Caco-2 (cell line): ENCODE measurements at regions of chr6 and their contacts with region 1.

Region 1: GRCh38 chr6:133923938-133924593 is 29.0 kb upstream of the TBPL1 start:
- DNase-seq: peak; percentile 54 to 69
- H3K4me3 ChIP-seq: no peak overlapping the region
- H3K4me3 Mint-ChIP-seq: no peak overlapping the region
- H3K27ac Mint-ChIP-seq: no peak overlapping the region
- H3K4me1 ChIP-seq: no peaks in the 10 kb centered on the region
- H3K4me1 Mint-ChIP-seq: no peaks in the 10 kb centered on the region
- H3K27me3 ChIP-seq: no peaks in the 10 kb centered on the region
- H3K27me3 Mint-ChIP-seq: peaks cover 12% of the 10 kb centered on the region
- CTCF ChIP-seq: peak; percentile 71 to 77

Region 2: DNA sequence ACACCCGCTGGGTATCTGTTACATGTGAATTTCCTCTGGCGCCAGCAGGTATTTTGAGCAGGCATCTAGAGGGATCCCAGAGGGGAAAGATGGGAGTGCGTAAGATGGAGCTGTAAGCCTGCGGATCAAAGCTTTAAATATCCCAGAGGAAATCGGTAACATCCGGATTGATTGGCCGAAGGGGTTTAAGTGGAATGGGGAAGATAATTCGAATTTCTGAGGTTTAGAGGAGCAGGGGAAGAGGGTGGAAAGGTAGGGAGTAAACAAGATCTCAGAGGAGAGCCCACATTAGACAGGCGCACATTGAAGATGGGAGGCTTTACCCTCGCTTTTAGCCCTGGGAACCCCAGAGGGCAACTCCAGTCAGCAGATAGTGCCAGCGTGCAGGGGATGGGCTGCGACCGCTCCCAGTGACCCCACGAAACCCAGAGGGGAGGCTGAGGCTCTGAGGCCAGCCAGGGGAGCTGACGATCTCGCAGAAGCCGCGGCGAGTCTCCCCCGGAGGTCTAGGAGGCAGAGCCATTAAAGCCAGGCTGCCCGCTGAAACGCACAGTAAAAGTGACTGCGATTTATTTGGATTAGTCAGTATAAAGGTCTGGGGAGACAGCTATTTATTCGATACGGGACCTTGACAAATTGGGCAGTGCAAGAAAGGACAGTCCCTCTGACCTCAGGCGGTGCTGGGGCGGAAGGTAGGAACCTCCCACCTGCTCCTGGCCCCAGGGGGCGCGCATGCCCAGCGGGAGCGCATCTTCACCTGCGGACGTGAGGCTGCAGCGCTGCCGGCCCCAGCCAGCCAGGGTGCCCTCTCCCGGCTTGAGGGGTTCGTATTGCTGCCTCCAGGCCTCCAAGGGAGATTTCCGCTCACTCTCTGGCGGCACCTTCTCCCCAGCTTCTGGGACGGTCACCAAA is 69.4 kb before region 1 on chr6:
- CTCF ChIA-PET with region 1: no interaction called
- POLR2A ChIA-PET with region 1: no interaction called
- intact Hi-C with region 1: no loop called
- DNase-seq: peak; percentile 56 to 61
- H3K4me3 ChIP-seq: 0 out of 2 replicates have a peak overlapping the region, but pooled peaks have one; percentile 23
- H3K4me3 Mint-ChIP-seq: peak overlapping the region; percentile 44
- H3K27ac Mint-ChIP-seq: no peak overlapping the region
- H3K4me1 ChIP-seq: no peaks in the 10 kb centered on the region
- H3K4me1 Mint-ChIP-seq: no peaks in the 10 kb centered on the region
- H3K27me3 ChIP-seq: no peaks in the 10 kb centered on the region
- H3K27me3 Mint-ChIP-seq: peaks cover 16% of the 10 kb centered on the region
- CTCF ChIP-seq: peak in 1 of 2 experiments; percentile 46

Region 3: GRCh38 chr6:133952815-133953633 is 29.0 kb after region 1 on chr6 and contains the start of gene TBPL1:
- CTCF ChIA-PET with region 1: interaction called, 5 read pairs
- POLR2A ChIA-PET with region 1: no interaction called
- intact Hi-C with region 1: loop called (anchors 2 kb)
- DNase-seq: peak; percentile 88 to 91
- H3K4me3 ChIP-seq: peak within 1 kb of the TSS; percentile 76
- H3K4me3 Mint-ChIP-seq: peak within 1 kb of the TSS; percentile 96
- H3K27ac Mint-ChIP-seq: peak within 1 kb of the TSS; percentile 86
- H3K4me1 ChIP-seq: peaks cover 5% of the 10 kb centered on the region; the same call in 1 of the 2 replicates
- H3K4me1 Mint-ChIP-seq: peaks cover 7% of the 10 kb centered on the region
- H3K27me3 ChIP-seq: no peaks in the 10 kb centered on the region
- H3K27me3 Mint-ChIP-seq: peaks cover 6% of the 10 kb centered on the region
- CTCF ChIP-seq: no peak
- total RNA-seq, gene TBPL1: 19.3 and 23.6 TPM in 2 replicates

Region 4: GRCh38 chr6:133973109-133973971 is 49.3 kb after region 1 on chr6:
- CTCF ChIA-PET with region 1: interaction called, 3 read pairs
- POLR2A ChIA-PET with region 1: no interaction called
- intact Hi-C with region 1: loop called (anchors 1 kb)
- DNase-seq: no peak
- H3K4me3 ChIP-seq: no peak overlapping the region
- H3K4me3 Mint-ChIP-seq: no peak overlapping the region
- H3K27ac Mint-ChIP-seq: no peak overlapping the region
- H3K4me1 ChIP-seq: no peaks in the 10 kb centered on the region
- H3K4me1 Mint-ChIP-seq: peaks cover 3% of the 10 kb centered on the region
- H3K27me3 ChIP-seq: no peaks in the 10 kb centered on the region
- H3K27me3 Mint-ChIP-seq: no peaks in the 10 kb centered on the region
- CTCF ChIP-seq: peak; percentile 40 to 58

Region 5: GRCh38 chr6:134063966-134064445 is 139.9 kb after region 1 on chr6:
- CTCF ChIA-PET with region 1: interaction called, 21 read pairs
- POLR2A ChIA-PET with region 1: no interaction called
- intact Hi-C with region 1: loop called (anchors 1 kb)
- DNase-seq: peak; percentile 70 to 77
- H3K4me3 ChIP-seq: no peak overlapping the region
- H3K4me3 Mint-ChIP-seq: no peak overlapping the region
- H3K27ac Mint-ChIP-seq: no peak overlapping the region
- H3K4me1 ChIP-seq: peaks cover 10% of the 10 kb centered on the region
- H3K4me1 Mint-ChIP-seq: peaks cover 11% of the 10 kb centered on the region
- H3K27me3 ChIP-seq: no peaks in the 10 kb centered on the region
- H3K27me3 Mint-ChIP-seq: no peaks in the 10 kb centered on the region
- CTCF ChIP-seq: peak; percentile 83 to 94

Region 6: DNA sequence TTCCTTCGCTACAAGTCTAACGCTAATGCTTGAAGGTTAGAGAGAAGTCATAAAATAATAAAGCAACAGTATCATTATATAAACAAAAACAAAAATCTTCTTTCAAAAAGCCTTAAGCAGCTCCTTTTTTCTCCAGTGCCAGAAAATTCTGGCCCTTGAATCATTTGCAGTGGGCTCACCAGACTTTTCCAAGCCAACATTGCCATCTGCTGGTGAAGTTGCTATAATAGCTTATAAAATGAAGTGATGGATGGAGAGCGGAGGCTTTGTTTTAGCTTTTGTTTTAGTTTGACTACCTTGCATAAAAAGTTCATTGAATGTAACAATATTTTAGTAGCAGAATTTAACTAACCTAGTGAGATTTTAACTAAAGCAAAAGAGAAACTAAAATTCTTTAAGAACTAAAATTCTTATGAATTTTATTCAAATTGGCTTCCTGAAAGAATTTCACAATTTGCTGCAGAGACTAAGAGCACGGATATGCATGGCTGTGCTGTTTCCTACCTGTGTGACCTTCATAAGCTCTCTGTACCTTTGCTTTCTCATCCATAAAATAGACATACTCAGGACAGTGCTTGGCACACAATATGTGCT is 173.1 kb after region 1 on chr6:
- CTCF ChIA-PET with region 1: interaction called, 97 read pairs
- POLR2A ChIA-PET with region 1: no interaction called
- intact Hi-C with region 1: loop called (anchors 1 kb)
- DNase-seq: peak; percentile 51 to 72
- H3K4me3 ChIP-seq: no peak overlapping the region
- H3K4me3 Mint-ChIP-seq: no peak overlapping the region
- H3K27ac Mint-ChIP-seq: no peak overlapping the region
- H3K4me1 ChIP-seq: no peaks in the 10 kb centered on the region
- H3K4me1 Mint-ChIP-seq: no peaks in the 10 kb centered on the region
- H3K27me3 ChIP-seq: no peaks in the 10 kb centered on the region; the same call in 1 of the 2 replicates
- H3K27me3 Mint-ChIP-seq: peaks cover 3% of the 10 kb centered on the region
- CTCF ChIP-seq: peak; percentile 56 to 60

Region 7: GRCh38 chr6:134949927-134950326 is 1025.9 kb after region 1 on chr6 and contains the start of gene ALDH8A1:
- CTCF ChIA-PET with region 1: no interaction called
- POLR2A ChIA-PET with region 1: no interaction called
- intact Hi-C with region 1: loop called (anchors 10 kb)
- DNase-seq: no peak
- H3K4me3 ChIP-seq: no peak within 1 kb of the TSS
- H3K4me3 Mint-ChIP-seq: no peak within 1 kb of the TSS
- H3K27ac Mint-ChIP-seq: no peak within 1 kb of the TSS
- H3K4me1 ChIP-seq: no peaks in the 10 kb centered on the region
- H3K4me1 Mint-ChIP-seq: no peaks in the 10 kb centered on the region
- H3K27me3 ChIP-seq: no peaks in the 10 kb centered on the region
- H3K27me3 Mint-ChIP-seq: no peaks in the 10 kb centered on the region
- CTCF ChIP-seq: no peak
- total RNA-seq, gene ALDH8A1: 0.21 and 0.29 TPM in 2 replicates